ENCODE measurements at regions of chr16 and their contacts with region 1.

Region 1: DNA sequence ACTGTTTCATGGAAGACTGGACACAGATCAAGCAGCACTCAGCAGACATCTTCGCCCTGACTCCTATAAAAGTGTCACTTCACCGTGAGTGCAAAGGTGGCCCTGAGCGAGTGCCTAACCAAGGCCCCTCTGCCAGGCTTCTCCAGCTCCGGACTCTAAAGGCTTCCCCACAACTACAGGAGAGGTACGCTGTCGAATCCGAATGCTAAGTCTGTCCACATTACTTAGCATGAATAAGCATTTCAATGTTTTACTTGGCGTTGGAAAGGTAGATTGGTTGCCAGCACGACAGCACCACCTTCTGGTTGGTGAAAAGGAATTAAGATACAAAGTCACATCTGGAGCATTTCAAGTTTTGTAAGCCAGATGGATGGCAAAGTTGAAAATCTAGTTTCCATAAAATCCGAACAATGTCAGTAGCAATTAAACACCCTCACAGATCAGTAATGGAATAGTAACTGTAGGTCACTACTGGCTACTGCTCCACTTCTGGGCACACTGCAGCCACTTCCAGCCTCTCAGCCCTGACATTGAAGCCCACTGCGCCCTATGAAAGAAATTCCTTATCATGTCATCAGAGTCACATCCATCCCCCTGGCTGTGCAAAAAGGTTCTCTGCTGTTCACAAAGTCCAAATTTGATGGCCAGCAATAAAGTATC is 100.9 kb downstream of the PARN start:
- DNase-seq: peak; percentile 72 to 83
- ATAC-seq: peak; percentile 90 to 91
- H3K4me3 ChIP-seq: peak overlapping the region; percentile 26 to 49 (median 40)
- H3K27ac ChIP-seq: peak overlapping the region; percentile 82 to 92 (median 86)
- H3K4me1 ChIP-seq: peaks cover 23 to 44% of the 10 kb centered on the region in 2 donors
- H3K27me3 ChIP-seq: no peaks in the 10 kb centered on the region
- CTCF ChIP-seq: peak; percentile 74 to 88 (median 80)
- POLR2A ChIP-seq: peak; percentile 52 to 70

Region 2: GRCh38 chr16:14249291-14250032 is 279.7 kb before region 1 on chr16:
- in situ Hi-C with region 1: loop called in 2 of 4 experiments (anchors 10 kb)
- intact Hi-C with region 1: loop called (anchors 1 kb)
- DNase-seq: peak in 1 of 2 donors; percentile 30
- ATAC-seq: peak; percentile 40 to 63
- H3K4me3 ChIP-seq: no peak overlapping the region
- H3K27ac ChIP-seq: peak overlapping the region; percentile 12 to 45 (median 27)
- H3K4me1 ChIP-seq: peaks cover 0 to 3% of the 10 kb centered on the region in 2 donors
- H3K27me3 ChIP-seq: no peaks in the 10 kb centered on the region
- CTCF ChIP-seq: peak; percentile 68 to 86 (median 72)
- POLR2A ChIP-seq: no peak

Region 3: GRCh38 chr16:14300705-14301168 is 228.4 kb before region 1 on chr16:
- in situ Hi-C with region 1: loop called (anchors 5 to 10 kb)
- intact Hi-C with region 1: loop called (anchors 1 kb)
- DNase-seq: peak; percentile 74 to 86
- ATAC-seq: peak; percentile 69 to 72
- H3K4me3 ChIP-seq: peak overlapping the region; percentile 61 to 98 (median 82)
- H3K27ac ChIP-seq: peak overlapping the region; percentile 88 to 99 (median 96)
- H3K4me1 ChIP-seq: peaks cover 9 to 17% of the 10 kb centered on the region in 2 donors
- H3K27me3 ChIP-seq: no peaks in the 10 kb centered on the region
- CTCF ChIP-seq: peak; percentile 35 to 69 (median 60)
- POLR2A ChIP-seq: peak; percentile 33 to 39

Region 4: GRCh38 chr16:14436401-14436955 is 92.7 kb before region 1 on chr16:
- in situ Hi-C with region 1: no loop called
- intact Hi-C with region 1: loop called (anchors 5 kb)
- DNase-seq: peak; percentile 78 to 92
- ATAC-seq: peak; percentile 92 to 97
- H3K4me3 ChIP-seq: peak overlapping the region; percentile 22 to 40 (median 32)
- H3K27ac ChIP-seq: peak overlapping the region; percentile 77 to 85 (median 82)
- H3K4me1 ChIP-seq: peaks cover 8 to 17% of the 10 kb centered on the region in 2 donors
- H3K27me3 ChIP-seq: no peaks in the 10 kb centered on the region
- CTCF ChIP-seq: no peak
- POLR2A ChIP-seq: peak in 1 of 2 donors; percentile 17

Region 5: GRCh38 chr16:14501331-14502255 is 27.5 kb before region 1 on chr16:
- in situ Hi-C with region 1: no loop called
- intact Hi-C with region 1: loop called (anchors 1 kb)
- DNase-seq: peak; percentile 91 to 96
- ATAC-seq: peak; percentile 86 to 91
- H3K4me3 ChIP-seq: peak overlapping the region in 1 of 4 donors; percentile 28
- H3K27ac ChIP-seq: peak overlapping the region; percentile 85 to 88 (median 86)
- H3K4me1 ChIP-seq: peaks cover 77 to 83% of the 10 kb centered on the region in 2 donors
- H3K27me3 ChIP-seq: no peaks in the 10 kb centered on the region
- CTCF ChIP-seq: no peak
- POLR2A ChIP-seq: peak in 1 of 2 donors; percentile 27

Region 6: DNA sequence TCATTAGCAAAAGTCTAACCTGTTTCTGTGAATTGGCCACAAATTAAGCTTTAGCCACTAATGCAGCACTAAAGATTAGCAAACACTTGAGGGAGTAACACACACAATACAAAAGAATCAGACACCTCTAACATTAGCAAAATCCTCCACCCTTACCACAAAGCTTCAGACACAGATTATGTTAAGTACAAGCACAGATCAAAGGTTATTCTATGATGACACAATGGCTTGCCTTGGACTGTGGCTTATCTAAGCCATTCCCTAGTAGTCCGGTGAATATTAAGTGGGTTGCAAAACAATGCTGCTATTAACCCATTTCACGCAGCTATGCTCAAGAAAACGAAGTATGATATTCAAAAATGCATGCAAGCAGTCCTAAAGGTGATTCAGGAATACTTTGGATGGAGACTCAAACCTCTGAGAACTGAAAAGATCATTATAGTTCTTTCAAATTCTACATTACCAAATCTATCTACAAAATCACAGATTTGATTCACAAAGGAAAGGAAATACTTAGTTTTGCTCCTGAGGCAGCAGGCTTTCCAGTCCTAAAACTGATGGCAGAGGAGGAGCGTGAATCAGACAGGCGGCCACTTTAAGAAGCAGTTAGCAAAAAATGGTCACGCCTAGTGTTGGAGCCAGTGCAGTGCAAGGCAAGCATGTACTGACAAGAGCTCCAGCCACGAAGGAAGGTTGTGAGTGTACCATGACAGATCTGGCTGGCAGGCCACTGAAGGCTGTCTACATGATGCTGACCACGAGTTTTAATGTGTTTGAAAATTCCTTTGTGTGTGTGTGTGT is 33.8 kb after region 1 on chr16:
- in situ Hi-C with region 1: no loop called
- intact Hi-C with region 1: no loop called
- DNase-seq: peak in 1 of 2 donors; percentile 56
- ATAC-seq: peak; percentile 59 to 80
- H3K4me3 ChIP-seq: no peak overlapping the region
- H3K27ac ChIP-seq: peak overlapping the region in 1 of 4 donors; percentile 7
- H3K4me1 ChIP-seq: peaks cover 10 to 22% of the 10 kb centered on the region in 2 donors
- H3K27me3 ChIP-seq: no peaks in the 10 kb centered on the region
- CTCF ChIP-seq: peak in 2 of 5 experiments; percentile 12 to 26
- POLR2A ChIP-seq: no peak

Measured in gastrocnemius medialis (tissue), 4 donors.